Activated CD4-positive, alpha-beta T cell treated with anti-CD3 and anti-CD28 coated beads, Interleukin-2, amount 10 ng/mL, durations not matched to agents 24 days and 14 days (primary cell): ENCODE measurements at regions of chr1 and their contacts with region 1.

Region 1: GRCh38 chr1:117654493-117655219 is 48.8 kb downstream of the TENT5C start:
- DNase-seq: peak; percentile 75
- H3K4me3 Mint-ChIP-seq: peak overlapping the region; percentile 72
- H3K27ac Mint-ChIP-seq: peak overlapping the region; percentile 77
- H3K4me1 Mint-ChIP-seq: peaks cover 80% of the 10 kb centered on the region
- H3K27me3 Mint-ChIP-seq: peaks cover 12% of the 10 kb centered on the region

Region 2: DNA sequence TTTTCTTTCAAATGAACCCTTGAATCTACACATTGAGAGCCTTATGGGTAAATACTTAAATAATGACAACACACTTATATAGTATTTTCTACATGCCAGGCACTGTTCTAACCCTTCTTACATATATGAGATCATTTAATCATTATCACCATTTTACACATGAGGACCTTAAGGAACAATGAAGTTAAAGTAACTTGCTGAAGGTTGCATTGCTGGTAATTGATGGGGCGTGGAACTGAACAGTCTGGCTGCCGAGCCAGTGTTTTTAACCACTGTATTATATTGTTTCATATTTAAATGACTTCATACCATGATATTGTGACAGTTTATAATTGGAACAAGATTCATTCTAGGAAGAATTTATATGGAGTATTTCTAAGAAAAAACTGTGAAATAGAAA is 160.8 kb before region 1 on chr1:
- intact Hi-C with region 1: no loop called
- DNase-seq: no peak
- H3K4me3 Mint-ChIP-seq: no peak overlapping the region
- H3K27ac Mint-ChIP-seq: no peak overlapping the region
- H3K4me1 Mint-ChIP-seq: no peaks in the 10 kb centered on the region
- H3K27me3 Mint-ChIP-seq: no peaks in the 10 kb centered on the region

Region 3: GRCh38 chr1:119140177-119141019 is 1485.7 kb after region 1 on chr1 and contains the start of gene WARS2:
- intact Hi-C with region 1: loop called (anchors 5 kb)
- DNase-seq: peak; percentile 98
- H3K4me3 Mint-ChIP-seq: no peak within 1 kb of the TSS
- H3K27ac Mint-ChIP-seq: no peak within 1 kb of the TSS
- H3K4me1 Mint-ChIP-seq: peaks cover 26% of the 10 kb centered on the region
- H3K27me3 Mint-ChIP-seq: no peaks in the 10 kb centered on the region
- total RNA-seq, gene WARS2: 20.2 and 21.5 TPM in 2 replicates